ENCODE measurements at regions of chr7 and their contacts with region 1.

Region 1: DNA sequence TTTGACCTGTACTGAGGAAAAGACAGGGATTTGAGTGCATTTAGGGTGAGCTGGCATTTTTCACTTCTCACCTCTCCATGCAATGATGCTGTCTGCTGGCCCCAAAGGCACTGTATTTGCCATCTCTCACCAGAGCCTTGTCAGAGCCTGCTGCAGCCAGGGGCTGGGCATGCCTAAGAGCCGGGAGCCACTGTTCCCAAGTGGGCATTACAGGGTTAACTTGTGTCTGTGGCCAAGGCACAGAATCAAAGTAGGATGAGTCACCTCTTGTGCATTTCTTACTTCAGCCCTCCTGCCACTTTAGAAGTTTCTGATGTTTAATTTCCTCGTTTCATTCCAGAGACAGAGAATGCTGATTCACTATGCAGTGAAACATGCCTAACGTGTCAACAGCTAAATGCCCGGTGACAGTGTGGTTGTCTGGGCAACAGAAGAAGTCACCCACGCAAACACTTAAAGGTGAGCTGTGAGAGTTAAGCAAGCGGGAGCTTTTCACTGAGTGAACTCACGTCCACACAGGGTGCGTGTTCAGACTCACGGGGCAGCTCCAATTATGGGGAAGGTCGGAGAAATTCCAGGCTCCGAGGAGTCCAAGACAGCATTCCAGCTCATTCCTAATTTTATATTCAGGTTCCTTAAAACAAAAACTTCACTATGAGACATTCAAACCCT is 57.1 kb upstream of the IGFBP3 start:
- DNase-seq: peak; percentile 92
- H3K4me3 ChIP-seq: peak overlapping the region; percentile 23
- H3K27ac ChIP-seq: peak overlapping the region; percentile 96
- H3K27me3 ChIP-seq: no peaks in the 10 kb centered on the region
- CTCF ChIP-seq: no peak

Region 2: GRCh38 chr7:45863715-45864114 is 114.4 kb before region 1 on chr7:
- CTCF ChIA-PET with region 1: no interaction called
- POLR2A ChIA-PET with region 1: no interaction called
- DNase-seq: no peak
- H3K4me3 ChIP-seq: no peak overlapping the region
- H3K27ac ChIP-seq: no peak overlapping the region
- H3K27me3 ChIP-seq: peaks cover 18% of the 10 kb centered on the region
- CTCF ChIP-seq: peak; percentile 25

Region 3: GRCh38 chr7:45998506-45998905 is 20.4 kb after region 1 on chr7:
- CTCF ChIA-PET with region 1: no interaction called
- POLR2A ChIA-PET with region 1: interaction called, 11 read pairs
- DNase-seq: no peak
- H3K4me3 ChIP-seq: no peak overlapping the region
- H3K27ac ChIP-seq: no peak overlapping the region
- H3K27me3 ChIP-seq: no peaks in the 10 kb centered on the region
- CTCF ChIP-seq: no peak

Region 4: DNA sequence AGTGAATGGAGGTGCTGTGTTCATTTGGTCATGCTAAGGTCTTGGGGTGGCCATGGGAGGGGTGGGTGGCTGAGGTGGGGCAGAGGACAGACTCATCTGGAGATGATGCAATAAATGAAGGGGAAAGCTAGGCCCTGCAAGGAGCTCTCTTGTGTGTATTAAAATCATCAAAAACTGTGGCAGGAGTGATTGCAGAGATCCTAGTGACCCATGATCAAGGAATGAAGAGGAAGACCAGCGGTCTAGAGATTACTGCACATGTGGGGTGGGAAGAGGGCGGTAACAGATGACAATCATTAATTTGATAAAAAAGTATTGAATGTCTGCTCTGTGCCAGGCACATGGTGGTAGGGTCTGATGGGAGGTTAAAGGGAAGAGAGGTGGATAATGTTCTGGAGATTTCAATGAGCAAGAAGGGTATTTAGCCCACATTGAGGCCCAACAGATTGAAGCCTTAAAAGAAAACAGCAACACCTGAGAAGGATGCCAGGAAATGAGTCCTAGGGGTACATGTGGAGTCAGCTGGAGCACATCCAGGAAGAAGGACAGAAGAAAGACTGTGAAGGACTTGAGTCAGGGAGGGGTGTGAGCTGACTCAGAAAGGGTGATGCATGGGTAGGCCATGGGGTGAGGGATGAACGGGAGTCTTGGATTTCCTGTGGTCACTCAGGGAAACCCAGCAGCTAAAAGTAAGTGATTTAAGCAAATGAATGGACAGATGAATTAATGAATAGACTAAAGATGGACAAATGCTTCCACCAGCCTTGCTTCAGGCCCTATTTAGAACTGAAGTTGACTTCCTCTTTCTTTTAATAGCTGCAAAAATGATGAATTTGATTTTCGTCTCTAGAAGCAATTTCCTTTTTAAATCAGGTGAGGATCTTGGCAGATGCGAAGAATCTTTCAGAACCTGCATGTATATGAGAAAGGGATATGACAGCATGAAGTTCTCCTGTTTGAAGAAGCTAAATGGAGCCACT is 26.0 kb after region 1 on chr7:
- CTCF ChIA-PET with region 1: no interaction called
- POLR2A ChIA-PET with region 1: interaction called, 11 read pairs
- DNase-seq: peak; percentile 55
- H3K4me3 ChIP-seq: no peak overlapping the region
- H3K27ac ChIP-seq: no peak overlapping the region
- H3K27me3 ChIP-seq: no peaks in the 10 kb centered on the region
- CTCF ChIP-seq: no peak

Region 5: DNA sequence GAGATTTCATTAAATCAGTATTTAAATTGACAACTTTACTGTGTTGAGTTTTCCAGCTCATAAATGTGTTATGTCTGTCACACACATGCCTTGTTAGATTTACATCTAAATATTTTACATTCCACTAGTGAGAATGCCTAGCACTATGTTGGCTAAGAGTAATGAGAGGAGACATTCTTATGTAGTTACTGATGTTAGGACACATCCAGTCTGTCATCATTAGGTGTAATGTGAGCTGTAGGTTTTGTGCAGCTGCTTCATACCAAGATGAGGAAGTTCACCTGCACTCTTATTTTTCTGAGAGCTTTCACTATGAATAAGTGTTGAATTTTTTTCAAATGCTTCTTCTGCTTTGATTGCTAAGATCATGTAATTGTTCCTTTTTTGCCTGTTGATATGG is 160.9 kb after region 1 on chr7:
- CTCF ChIA-PET with region 1: no interaction called
- POLR2A ChIA-PET with region 1: interaction called, 11 read pairs
- DNase-seq: peak; percentile 81
- H3K4me3 ChIP-seq: no peak overlapping the region
- H3K27ac ChIP-seq: no peak overlapping the region
- H3K27me3 ChIP-seq: no peaks in the 10 kb centered on the region
- CTCF ChIP-seq: no peak

Measured in AG04450 (cell line).